Breast epithelium (tissue), 4 donors: ENCODE measurements at regions of chr9 and their contacts with region 1.

Region 1: GRCh38 chr9:7844242-7844641 is 44.7 kb upstream of the DMAC1 start:
- DNase-seq: no peak
- H3K4me3 ChIP-seq: no peak overlapping the region
- H3K27ac ChIP-seq: no peak overlapping the region
- H3K4me1 ChIP-seq: no peaks in the 10 kb centered on the region
- H3K27me3 ChIP-seq: no peaks in the 10 kb centered on the region
- CTCF ChIP-seq: peak in 1 of 3 donors; percentile 34
- POLR2A ChIP-seq: no peak

Region 2: GRCh38 chr9:8106362-8106761 is 262.1 kb after region 1 on chr9:
- intact Hi-C with region 1: loop called (anchors 5 kb)
- DNase-seq: no peak
- H3K4me3 ChIP-seq: no peak overlapping the region
- H3K27ac ChIP-seq: no peak overlapping the region
- H3K4me1 ChIP-seq: no peaks in the 10 kb centered on the region
- H3K27me3 ChIP-seq: no peaks in the 10 kb centered on the region
- CTCF ChIP-seq: no peak
- POLR2A ChIP-seq: no peak

Region 3: DNA sequence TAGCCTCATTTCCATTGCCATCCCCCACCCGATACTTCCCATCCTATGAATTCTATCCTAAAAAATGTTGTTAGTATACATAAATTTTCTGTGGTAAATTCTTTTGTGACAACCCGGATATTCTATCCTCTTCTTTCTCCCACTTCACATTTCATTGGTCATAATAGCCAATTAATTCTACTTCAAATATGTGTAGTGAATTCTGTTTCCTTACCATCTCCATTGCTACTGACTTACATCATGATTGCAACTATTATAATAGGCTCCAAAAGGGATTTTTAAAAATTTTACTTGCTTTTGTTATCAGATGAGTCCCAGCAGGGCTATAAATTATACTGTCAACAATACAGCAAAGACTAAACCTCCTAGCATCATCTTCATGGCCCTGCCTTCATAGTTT is 1441.8 kb after region 1 on chr9:
- intact Hi-C with region 1: loop called (anchors 10 kb)
- DNase-seq: no peak
- H3K4me3 ChIP-seq: no peak overlapping the region
- H3K27ac ChIP-seq: no peak overlapping the region
- H3K4me1 ChIP-seq: no peaks in the 10 kb centered on the region
- H3K27me3 ChIP-seq: no peaks in the 10 kb centered on the region
- CTCF ChIP-seq: no peak
- POLR2A ChIP-seq: no peak